PC-9 (cell line): ENCODE measurements at regions of chr11 and their contacts with region 1.

Region 1: DNA sequence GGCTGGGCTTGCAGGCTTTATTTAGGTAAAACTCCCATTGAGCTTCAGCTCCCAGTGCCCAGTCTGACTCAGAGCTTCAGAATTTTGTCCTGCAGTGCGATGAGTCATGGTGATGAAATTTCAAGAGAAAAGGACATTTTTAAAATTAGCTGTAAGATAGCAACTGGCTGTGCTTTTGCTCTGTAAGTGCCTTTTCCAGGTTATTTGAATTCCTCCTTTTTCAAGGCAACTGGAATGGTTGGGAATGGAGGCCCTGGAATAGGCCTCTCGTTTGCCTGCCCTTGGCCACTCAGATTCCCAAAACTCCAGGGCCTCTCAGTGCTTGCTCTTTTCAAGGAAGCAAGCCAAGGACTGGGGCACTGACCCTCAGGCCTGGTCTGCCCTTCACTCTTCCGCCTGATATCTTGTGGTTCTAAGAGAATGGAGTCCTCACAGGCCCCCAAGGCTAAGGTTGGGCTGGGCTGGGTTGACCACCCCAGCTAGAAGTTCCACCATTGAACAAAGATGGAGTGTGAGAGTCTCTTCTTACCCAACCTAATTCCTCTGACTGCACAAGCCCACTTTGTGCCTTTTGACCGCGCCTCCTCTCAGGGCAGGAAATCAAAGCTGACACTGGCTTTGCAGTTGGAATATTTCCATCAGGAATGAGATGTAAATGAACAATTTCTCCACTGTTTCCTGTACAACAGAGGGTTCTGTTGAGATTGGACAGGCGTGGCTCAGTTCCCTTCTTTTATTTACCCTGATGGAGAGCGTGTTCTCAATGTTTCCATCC is 59.4 kb upstream of the PRSS23 start:
- DNase-seq: peak; percentile 69 to 96
- H3K4me3 ChIP-seq: peak overlapping the region; percentile 7; the same call in 1 of the 2 replicates
- H3K27ac ChIP-seq: peak overlapping the region; percentile 97
- H3K4me1 ChIP-seq: peaks cover 98% of the 10 kb centered on the region
- H3K27me3 ChIP-seq: no peaks in the 10 kb centered on the region
- CTCF ChIP-seq: no peak

Region 2: GRCh38 chr11:86456052-86456939 is 284.6 kb before region 1 on chr11:
- CTCF ChIA-PET with region 1: no interaction called
- POLR2A ChIA-PET with region 1: no interaction called
- intact Hi-C with region 1: loop called (anchors 1 kb)
- DNase-seq: peak; percentile 78
- H3K4me3 ChIP-seq: no peak overlapping the region
- H3K27ac ChIP-seq: no peak overlapping the region
- H3K4me1 ChIP-seq: peaks cover 31% of the 10 kb centered on the region
- H3K27me3 ChIP-seq: no peaks in the 10 kb centered on the region
- CTCF ChIP-seq: peak; percentile 96

Region 3: DNA sequence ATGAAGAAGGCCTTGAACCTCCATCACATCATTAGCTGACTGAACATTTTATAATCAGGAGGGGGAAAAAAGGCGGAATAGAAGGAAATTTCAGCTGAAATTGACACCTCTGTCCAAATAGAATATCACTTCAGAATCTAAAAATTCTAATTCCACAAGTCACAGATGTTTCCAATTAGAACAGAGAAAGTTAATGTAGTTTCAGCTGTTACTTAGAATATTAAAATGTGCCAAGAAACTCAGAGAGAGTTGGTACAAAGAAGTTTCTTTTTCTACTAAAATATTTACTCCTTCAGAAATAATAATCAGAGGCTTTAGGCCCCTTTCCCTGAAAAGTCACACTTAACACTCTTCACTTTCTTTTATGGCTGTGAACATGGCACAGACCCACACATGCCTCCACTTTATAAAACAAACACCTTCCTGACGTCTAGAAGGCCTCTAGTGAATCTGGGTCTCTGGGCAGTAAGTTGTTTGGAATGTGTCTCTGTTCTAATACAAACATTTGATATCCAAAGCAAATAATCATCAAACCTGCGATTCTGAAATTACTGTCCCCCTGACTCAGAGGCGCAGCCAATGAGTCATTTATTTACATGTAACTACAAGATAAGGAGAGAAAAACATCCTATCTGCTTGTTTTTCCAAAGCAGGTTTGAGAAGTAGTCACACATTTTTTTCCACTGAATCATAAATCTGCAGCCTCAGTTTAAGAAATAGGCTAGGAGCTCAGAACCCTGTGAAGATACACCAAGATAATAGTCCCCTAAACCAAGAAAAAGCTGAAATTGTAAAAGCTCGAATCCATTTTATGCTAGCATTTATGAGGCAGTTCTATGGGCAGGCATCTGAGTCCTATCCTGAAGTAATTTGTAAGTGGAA is 216.9 kb before region 1 on chr11:
- CTCF ChIA-PET with region 1: no interaction called
- POLR2A ChIA-PET with region 1: no interaction called
- intact Hi-C with region 1: loop called (anchors 1 kb)
- DNase-seq: peak; percentile 62 to 100
- H3K4me3 ChIP-seq: peak overlapping the region; percentile 27; the same call in 1 of the 2 replicates
- H3K27ac ChIP-seq: peak overlapping the region; percentile 94
- H3K4me1 ChIP-seq: peaks cover 37% of the 10 kb centered on the region
- H3K27me3 ChIP-seq: no peaks in the 10 kb centered on the region
- CTCF ChIP-seq: no peak

Region 4: GRCh38 chr11:86671682-86672621 is 68.9 kb before region 1 on chr11 and contains the start of gene ME3:
- CTCF ChIA-PET with region 1: interaction called, 5 read pairs
- POLR2A ChIA-PET with region 1: interaction called, 4 read pairs
- intact Hi-C with region 1: loop called (anchors 2 kb)
- DNase-seq: peak; percentile 63 to 74
- H3K4me3 ChIP-seq: peak within 1 kb of the TSS; percentile 82
- H3K27ac ChIP-seq: peak within 1 kb of the TSS; percentile 87
- H3K4me1 ChIP-seq: peaks cover 52% of the 10 kb centered on the region
- H3K27me3 ChIP-seq: no peaks in the 10 kb centered on the region
- CTCF ChIP-seq: no peak
- total RNA-seq, gene ME3: 34.0 and 61.1 TPM in 2 replicates

Region 5: GRCh38 chr11:86802601-86803051 is 61.7 kb after region 1 on chr11:
- CTCF ChIA-PET with region 1: no interaction called
- POLR2A ChIA-PET with region 1: interaction called, 3 read pairs
- intact Hi-C with region 1: loop called (anchors 1 kb)
- DNase-seq: peak; percentile 46 to 93
- H3K4me3 ChIP-seq: peak overlapping the region; percentile 92
- H3K27ac ChIP-seq: peak overlapping the region; percentile 68
- H3K4me1 ChIP-seq: peaks cover 48% of the 10 kb centered on the region
- H3K27me3 ChIP-seq: no peaks in the 10 kb centered on the region
- CTCF ChIP-seq: peak; percentile 89